HepG2 (cell line): ENCODE measurements at regions of chr5 and their contacts with region 1.

Region 1: GRCh38 chr5:173932695-173933139 is 44.6 kb downstream of the CPEB4 start:
- DNase-seq: peak; percentile 96
- ATAC-seq: peak; percentile 94
- H3K4me3 ChIP-seq: peak overlapping the region in 1 of 3 experiments; percentile 11; a peak in 1 of 6 replicates
- H3K27ac ChIP-seq: peak overlapping the region; percentile 79
- H3K4me1 ChIP-seq: peaks cover 87% of the 10 kb centered on the region
- H3K27me3 ChIP-seq: no peaks in the 10 kb centered on the region
- CTCF ChIP-seq: no peak
- EP300 ChIP-seq: peak in 1 of 2 experiments; percentile 96; a peak in 3 of 4 replicates
- POLR2A ChIP-seq: no peak
- RAD21 ChIP-seq: no peak

Region 2: GRCh38 chr5:173757403-173758209 is 175.1 kb before region 1 on chr5:
- CTCF ChIA-PET with region 1: no interaction called
- POLR2A ChIA-PET with region 1: no interaction called
- in situ Hi-C with region 1: no loop called
- intact Hi-C with region 1: no loop called
- DNase-seq: no peak
- ATAC-seq: no peak
- H3K4me3 ChIP-seq: no peak overlapping the region
- H3K27ac ChIP-seq: no peak overlapping the region
- H3K4me1 ChIP-seq: peaks cover 76% of the 10 kb centered on the region
- H3K27me3 ChIP-seq: no peaks in the 10 kb centered on the region
- CTCF ChIP-seq: no peak
- EP300 ChIP-seq: no peak
- POLR2A ChIP-seq: no peak
- RAD21 ChIP-seq: no peak

Region 3: GRCh38 chr5:173954671-173955521 is 22.2 kb after region 1 on chr5:
- CTCF ChIA-PET with region 1: no interaction called
- POLR2A ChIA-PET with region 1: interaction called, 11 read pairs
- in situ Hi-C with region 1: no loop called
- intact Hi-C with region 1: no loop called
- DNase-seq: no peak
- ATAC-seq: no peak
- H3K4me3 ChIP-seq: no peak overlapping the region
- H3K27ac ChIP-seq: peak overlapping the region; percentile 79
- H3K4me1 ChIP-seq: peaks cover 73% of the 10 kb centered on the region
- H3K27me3 ChIP-seq: no peaks in the 10 kb centered on the region
- CTCF ChIP-seq: no peak
- EP300 ChIP-seq: no peak
- POLR2A ChIP-seq: no peak
- RAD21 ChIP-seq: no peak